Cardiac septum (tissue), 1 donor: ENCODE measurements at regions of chr19 and their contacts with region 1.

Region 1: GRCh38 chr19:58278157-58279041 is at the start of gene ZNF8:
- DNase-seq: peak; percentile 98
- total RNA-seq, gene ZNF8: 6.2 TPM

Region 2: DNA sequence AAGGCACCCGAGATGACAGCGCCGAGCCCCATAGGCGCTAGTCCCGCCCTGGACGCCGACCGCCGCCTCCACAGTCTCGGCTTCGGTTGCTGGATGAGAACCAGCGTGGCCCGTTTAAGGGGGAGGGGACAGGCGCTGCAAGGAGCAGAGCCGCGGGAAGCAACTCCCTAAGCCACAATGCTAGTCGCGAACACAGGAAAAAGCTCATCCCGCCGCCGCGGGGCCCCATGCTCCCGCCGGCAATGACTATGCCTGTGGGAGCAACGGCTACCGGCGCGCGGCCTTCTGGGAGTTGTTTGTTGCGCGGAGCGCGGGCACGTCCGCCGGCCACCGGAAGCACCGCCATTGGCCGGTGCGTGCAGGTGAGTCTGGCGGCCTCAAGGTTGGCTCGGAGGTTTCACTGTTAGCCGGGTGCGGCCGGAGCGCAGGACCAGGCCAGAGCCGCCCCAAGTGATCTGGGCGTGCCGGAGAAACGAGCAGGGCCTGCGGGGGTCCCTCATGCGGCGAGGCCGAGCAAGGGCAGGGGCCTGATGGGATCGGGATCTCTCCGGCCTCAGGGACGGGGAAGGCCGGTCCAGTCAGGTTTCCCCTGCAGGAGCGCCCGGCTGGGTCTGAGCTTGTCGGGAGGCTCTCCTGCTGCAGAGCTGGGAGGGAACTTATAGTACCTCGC is 49.7 kb before region 1 on chr19 and contains the start of gene ZNF544:
- intact Hi-C with region 1: loop called (anchors 1 kb)
- DNase-seq: peak; percentile 92
- total RNA-seq, gene ZNF544: 28.1 TPM